ENCODE measurements at regions of chr5 and their contacts with region 1.

Region 1: DNA sequence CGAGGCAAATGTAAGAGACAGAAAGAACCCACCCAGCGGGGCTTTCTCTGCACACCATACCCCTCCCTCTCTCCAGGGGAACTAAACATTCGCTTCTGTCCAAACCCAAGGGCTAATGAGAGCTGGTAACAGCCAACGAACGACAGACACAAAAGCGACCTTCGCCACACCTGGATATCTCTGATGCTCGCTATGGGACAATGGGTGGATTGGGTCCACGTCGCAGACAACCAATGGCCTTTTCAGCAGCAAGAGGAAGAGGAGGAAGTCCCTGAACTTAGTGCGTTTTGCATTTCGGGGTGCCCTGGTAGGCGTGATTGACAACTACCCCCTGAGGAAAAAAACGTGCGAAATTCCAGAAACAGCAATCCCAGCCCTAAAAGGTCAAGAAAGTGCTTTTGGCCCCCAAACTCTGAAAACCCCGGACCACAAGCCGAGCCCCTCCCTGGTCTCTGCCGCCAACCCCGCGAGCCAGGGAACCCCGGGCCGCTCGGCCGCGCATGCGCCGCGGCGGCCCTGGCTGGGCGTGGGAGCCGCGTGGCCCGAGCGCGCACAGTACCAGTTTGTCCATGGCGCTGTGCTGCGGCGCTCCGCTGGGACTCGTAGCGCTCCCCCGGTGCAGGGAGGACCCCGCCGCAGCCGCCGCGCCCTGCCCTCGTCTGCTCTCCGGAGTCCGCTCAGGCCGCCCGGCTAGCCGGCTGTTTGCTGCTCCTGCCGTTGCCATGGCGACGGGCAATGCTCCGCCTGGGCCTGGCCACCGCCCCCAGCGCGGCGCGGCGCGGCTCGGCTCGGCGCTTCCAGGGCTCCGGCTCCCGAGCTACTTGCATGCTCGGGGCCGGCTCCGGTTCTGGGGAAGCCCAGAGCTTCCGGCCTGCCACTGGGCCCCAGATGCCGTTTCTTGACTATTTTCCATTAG is 66.9 kb upstream of the DNAH5 start:
- DNase-seq: peak; percentile 87 to 100
- H3K4me3 ChIP-seq: peak overlapping the region; percentile 63
- H3K27ac ChIP-seq: peak overlapping the region; percentile 75
- H3K4me1 ChIP-seq: peaks cover 40% of the 10 kb centered on the region
- H3K27me3 ChIP-seq: no peaks in the 10 kb centered on the region
- CTCF ChIP-seq: no peak

Region 2: GRCh38 chr5:14025569-14026286 is 14.4 kb after region 1 on chr5:
- CTCF ChIA-PET with region 1: interaction called, 4 read pairs
- POLR2A ChIA-PET with region 1: interaction called, 23 read pairs
- intact Hi-C with region 1: no loop called
- DNase-seq: peak; percentile 77 to 87
- H3K4me3 ChIP-seq: no peak overlapping the region
- H3K27ac ChIP-seq: peak overlapping the region; percentile 73
- H3K4me1 ChIP-seq: peaks cover 20% of the 10 kb centered on the region
- H3K27me3 ChIP-seq: no peaks in the 10 kb centered on the region
- CTCF ChIP-seq: no peak

Region 3: DNA sequence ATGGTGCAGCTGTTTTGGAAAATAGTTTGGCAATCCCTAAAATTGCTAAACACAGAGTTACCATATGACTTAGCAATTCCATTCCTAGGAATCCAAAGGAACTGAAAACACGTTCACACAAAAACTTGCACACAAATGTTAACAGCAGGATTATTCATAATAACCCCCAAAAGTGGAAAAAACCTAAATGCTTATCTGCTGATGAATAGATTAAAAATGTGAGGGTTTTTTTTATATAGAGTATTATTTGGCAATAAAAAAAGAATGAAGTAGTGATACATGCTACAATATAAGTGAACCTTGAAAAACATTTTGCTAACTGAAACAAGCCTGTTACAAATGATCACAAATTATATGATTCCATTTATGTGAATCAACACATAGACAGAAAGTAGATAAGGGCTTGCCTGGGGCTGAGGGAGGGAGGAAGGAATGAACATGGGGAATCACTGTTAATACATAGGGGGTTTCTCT is 86.7 kb after region 1 on chr5:
- CTCF ChIA-PET with region 1: no interaction called
- POLR2A ChIA-PET with region 1: no interaction called
- intact Hi-C with region 1: no loop called
- DNase-seq: no peak
- H3K4me3 ChIP-seq: no peak overlapping the region
- H3K27ac ChIP-seq: no peak overlapping the region
- H3K4me1 ChIP-seq: no peaks in the 10 kb centered on the region
- H3K27me3 ChIP-seq: no peaks in the 10 kb centered on the region
- CTCF ChIP-seq: no peak

Region 4: DNA sequence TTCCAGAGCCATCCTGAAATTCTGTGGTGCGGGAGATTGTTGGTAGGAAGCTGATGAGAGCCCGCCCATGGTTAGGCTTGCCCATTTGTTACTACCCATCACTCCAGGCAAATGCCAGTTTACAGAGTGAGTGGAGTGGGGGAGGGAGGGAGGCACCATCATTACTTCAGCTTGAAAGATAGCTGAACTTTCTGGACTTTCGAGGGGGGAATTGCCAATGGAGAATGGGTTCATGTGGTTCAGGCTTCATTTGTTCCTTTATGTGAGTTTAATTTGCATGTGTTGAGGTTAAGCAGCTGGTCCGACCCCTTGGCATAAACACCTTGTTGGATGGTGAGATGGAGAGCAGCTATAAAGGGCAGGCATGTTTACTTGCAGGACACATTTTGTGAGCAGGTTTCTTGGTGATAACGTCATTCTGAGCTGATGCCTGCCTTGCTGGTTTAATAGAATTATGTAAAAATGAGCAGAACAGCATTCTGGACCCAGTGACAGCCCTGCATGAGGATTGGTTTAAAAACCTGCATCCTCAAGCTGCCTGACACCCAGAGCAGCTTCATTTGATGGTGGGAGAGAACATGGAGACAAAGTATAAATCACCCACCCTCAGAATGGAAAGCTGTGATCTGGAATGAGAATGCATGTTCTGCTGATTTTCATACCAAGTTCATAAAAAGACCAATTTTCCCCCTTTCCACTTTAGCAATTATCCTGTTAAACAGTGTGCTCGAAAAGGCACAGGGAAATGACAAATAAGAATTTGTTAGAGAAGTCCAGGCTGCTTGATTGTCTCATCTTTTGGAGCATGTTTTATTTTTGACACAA is 238.1 kb after region 1 on chr5:
- CTCF ChIA-PET with region 1: no interaction called
- POLR2A ChIA-PET with region 1: interaction called, 11 read pairs
- intact Hi-C with region 1: no loop called
- DNase-seq: no peak
- H3K4me3 ChIP-seq: no peak overlapping the region
- H3K27ac ChIP-seq: no peak overlapping the region
- H3K4me1 ChIP-seq: 0 out of 2 replicates have a peak, but pooled peaks cover 4% of the 10 kb centered on the region
- H3K27me3 ChIP-seq: no peaks in the 10 kb centered on the region
- CTCF ChIP-seq: no peak

Region 5: DNA sequence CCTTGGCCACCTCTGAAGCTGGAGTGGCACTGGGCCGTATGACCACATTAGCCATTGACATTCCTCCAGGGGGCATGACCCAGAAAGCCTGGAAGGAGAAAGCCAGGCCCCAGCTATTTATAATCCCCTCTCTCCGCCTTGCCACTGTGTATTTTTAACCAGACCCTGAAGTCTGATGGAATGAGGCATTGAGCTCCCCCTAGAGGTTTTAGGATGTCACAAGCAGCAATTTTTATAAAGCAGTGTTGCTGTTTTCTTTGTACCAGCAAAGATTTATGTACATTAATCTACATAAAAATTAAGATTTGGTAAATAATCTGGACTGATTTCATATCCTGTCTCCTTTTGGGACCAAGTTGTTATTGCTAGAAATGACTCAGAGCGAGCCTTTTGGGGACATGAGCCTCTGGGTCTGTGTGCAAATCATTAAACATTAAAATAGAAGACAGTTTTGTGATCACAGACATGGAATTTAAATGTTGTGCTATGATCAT is 258.9 kb after region 1 on chr5:
- CTCF ChIA-PET with region 1: interaction called, 3 read pairs
- POLR2A ChIA-PET with region 1: interaction called, 5 read pairs
- intact Hi-C with region 1: loop called (anchors 1 kb)
- DNase-seq: peak; percentile 81 to 86
- H3K4me3 ChIP-seq: 0 out of 2 replicates have a peak overlapping the region, but pooled peaks have one; percentile 8
- H3K27ac ChIP-seq: peak overlapping the region; percentile 88
- H3K4me1 ChIP-seq: peaks cover 57% of the 10 kb centered on the region
- H3K27me3 ChIP-seq: no peaks in the 10 kb centered on the region
- CTCF ChIP-seq: peak; percentile 90

Region 6: GRCh38 chr5:14656898-14657297 is 645.6 kb after region 1 on chr5:
- CTCF ChIA-PET with region 1: interaction called, 25 read pairs
- POLR2A ChIA-PET with region 1: no interaction called
- intact Hi-C with region 1: no loop called
- DNase-seq: no peak
- H3K4me3 ChIP-seq: no peak overlapping the region
- H3K27ac ChIP-seq: no peak overlapping the region
- H3K4me1 ChIP-seq: no peaks in the 10 kb centered on the region
- H3K27me3 ChIP-seq: 0 out of 2 replicates have a peak, but pooled peaks cover 14% of the 10 kb centered on the region
- CTCF ChIP-seq: no peak